PC-9 (cell line): ENCODE measurements at regions of chr7 and their contacts with region 1.

Region 1: DNA sequence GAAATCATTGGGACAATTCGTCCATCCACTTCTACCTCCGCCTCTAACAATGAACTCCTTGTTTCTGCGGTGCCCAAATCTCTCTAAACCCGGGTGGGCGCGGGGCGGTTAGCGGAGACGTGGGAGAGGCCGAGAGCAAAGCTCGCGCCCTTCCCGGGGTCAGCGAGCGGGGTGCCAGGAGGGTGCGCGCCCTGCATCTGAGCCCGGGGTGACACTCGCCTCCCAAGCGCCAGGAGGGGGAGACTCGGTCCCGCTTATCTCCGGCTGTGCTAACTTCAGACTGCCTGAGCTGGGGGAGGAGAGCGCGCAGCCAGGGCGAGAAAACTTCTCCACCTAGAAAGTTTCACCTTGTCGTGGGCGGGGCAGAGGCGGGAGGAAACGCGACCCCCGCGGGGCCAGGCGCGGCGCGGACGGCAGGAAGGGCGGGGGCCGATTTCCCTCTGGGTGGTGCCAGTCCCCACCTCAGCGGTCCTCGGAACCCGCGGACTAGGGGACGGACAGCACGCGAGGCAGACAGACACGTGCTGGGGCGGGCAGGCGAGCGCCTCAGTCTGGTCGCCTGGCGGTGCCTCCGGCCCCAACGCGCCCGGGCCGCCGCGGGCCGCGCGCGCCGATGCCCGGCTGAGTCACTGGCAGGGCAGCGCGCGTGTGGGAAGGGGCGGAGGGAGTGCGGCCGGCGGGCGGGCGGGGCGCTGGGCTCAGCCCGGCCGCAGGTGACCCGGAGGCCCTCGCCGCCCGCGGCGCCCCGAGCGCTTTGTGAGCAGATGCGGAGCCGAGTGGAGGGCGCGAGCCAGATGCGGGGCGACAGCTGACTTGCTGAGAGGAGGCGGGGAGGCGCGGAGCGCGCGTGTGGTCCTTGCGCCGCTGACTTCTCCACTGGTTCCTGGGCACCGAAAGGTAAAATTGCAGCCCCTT is at the start of gene MET:
- DNase-seq: peak; percentile 82 to 98
- H3K4me3 ChIP-seq: peak within 1 kb of the TSS; percentile 98
- H3K27ac ChIP-seq: peak within 1 kb of the TSS; percentile 90
- H3K4me1 ChIP-seq: peaks cover 40% of the 10 kb centered on the region
- H3K27me3 ChIP-seq: no peaks in the 10 kb centered on the region
- CTCF ChIP-seq: peak; percentile 76
- total RNA-seq, gene MET: 237 and 287 TPM in 2 replicates

Region 2: GRCh38 chr7:115962340-115962739 is 709.6 kb before region 1 on chr7:
- CTCF ChIA-PET with region 1: no interaction called
- POLR2A ChIA-PET with region 1: no interaction called
- intact Hi-C with region 1: no loop called
- DNase-seq: no peak
- H3K4me3 ChIP-seq: no peak overlapping the region
- H3K27ac ChIP-seq: no peak overlapping the region
- H3K4me1 ChIP-seq: no peaks in the 10 kb centered on the region
- H3K27me3 ChIP-seq: no peaks in the 10 kb centered on the region
- CTCF ChIP-seq: no peak

Region 3: DNA sequence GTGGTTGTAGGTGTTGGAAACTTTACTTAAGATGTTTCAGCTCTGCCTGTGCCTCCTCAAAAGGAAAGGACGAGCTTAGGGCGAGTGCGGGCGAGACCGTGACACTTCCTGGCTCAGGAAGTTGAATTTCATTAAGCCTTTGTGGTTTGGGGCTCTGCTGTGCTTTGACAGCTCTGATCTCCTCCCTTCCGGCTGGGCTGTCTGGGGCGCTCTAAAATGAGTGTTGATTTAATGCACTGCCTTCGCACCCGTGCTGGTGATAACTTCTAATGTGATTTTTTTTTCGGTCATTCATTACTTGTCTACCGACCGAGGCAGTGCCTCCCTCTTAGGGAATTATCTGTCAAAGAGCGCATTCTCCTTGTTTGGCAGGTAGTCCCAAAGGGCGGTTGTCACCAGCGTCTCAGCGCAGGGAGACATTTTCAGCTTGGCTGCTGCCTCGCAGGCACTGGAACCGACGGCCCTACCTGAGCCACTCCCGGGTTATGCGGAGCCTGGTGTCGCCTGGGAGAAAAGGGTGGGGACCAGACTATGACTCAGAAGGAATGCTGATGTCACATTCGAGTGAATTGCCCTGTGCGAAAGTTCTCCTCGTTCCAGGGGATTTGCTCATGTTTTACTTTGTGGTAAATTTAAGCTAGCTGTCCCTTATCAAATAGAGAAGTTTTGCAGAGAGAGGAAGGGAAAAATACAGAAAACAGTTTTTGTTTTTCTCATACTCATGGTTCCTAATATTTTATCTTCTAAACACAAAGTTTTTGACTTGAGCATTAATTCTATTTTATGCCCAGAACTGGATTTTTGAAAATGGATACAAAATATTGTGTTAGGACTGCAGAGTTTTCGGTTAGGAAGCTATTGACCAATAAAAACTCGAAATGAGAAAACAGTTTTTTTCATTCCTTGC is 460.7 kb before region 1 on chr7:
- CTCF ChIA-PET with region 1: no interaction called
- POLR2A ChIA-PET with region 1: interaction called, 3 read pairs
- intact Hi-C with region 1: loop called (anchors 1 kb)
- DNase-seq: peak; percentile 92 to 93
- H3K4me3 ChIP-seq: peak overlapping the region; percentile 87
- H3K27ac ChIP-seq: peak overlapping the region; percentile 99
- H3K4me1 ChIP-seq: peaks cover 46% of the 10 kb centered on the region
- H3K27me3 ChIP-seq: no peaks in the 10 kb centered on the region
- CTCF ChIP-seq: no peak

Region 4: GRCh38 chr7:116598278-116598677 is 73.7 kb before region 1 on chr7:
- CTCF ChIA-PET with region 1: no interaction called
- POLR2A ChIA-PET with region 1: no interaction called
- intact Hi-C with region 1: no loop called
- DNase-seq: no peak
- H3K4me3 ChIP-seq: no peak overlapping the region
- H3K27ac ChIP-seq: no peak overlapping the region
- H3K4me1 ChIP-seq: no peaks in the 10 kb centered on the region
- H3K27me3 ChIP-seq: no peaks in the 10 kb centered on the region
- CTCF ChIP-seq: no peak

Region 5: GRCh38 chr7:116692401-116693308 is 20.7 kb after region 1 on chr7:
- CTCF ChIA-PET with region 1: no interaction called
- POLR2A ChIA-PET with region 1: interaction called, 10 read pairs
- intact Hi-C with region 1: loop called (anchors 1 kb)
- DNase-seq: peak in 1 of 2 experiments; percentile 89
- H3K4me3 ChIP-seq: peak overlapping the region; percentile 36; the same call in 1 of the 2 replicates
- H3K27ac ChIP-seq: peak overlapping the region; percentile 89
- H3K4me1 ChIP-seq: peaks cover 46% of the 10 kb centered on the region
- H3K27me3 ChIP-seq: no peaks in the 10 kb centered on the region
- CTCF ChIP-seq: no peak

Region 6: GRCh38 chr7:116733924-116734580 is 62.1 kb after region 1 on chr7:
- CTCF ChIA-PET with region 1: no interaction called
- POLR2A ChIA-PET with region 1: interaction called, 4 read pairs
- intact Hi-C with region 1: loop called (anchors 1 kb)
- DNase-seq: no peak
- H3K4me3 ChIP-seq: no peak overlapping the region
- H3K27ac ChIP-seq: no peak overlapping the region
- H3K4me1 ChIP-seq: peaks cover 13% of the 10 kb centered on the region
- H3K27me3 ChIP-seq: no peaks in the 10 kb centered on the region
- CTCF ChIP-seq: no peak

Region 7: GRCh38 chr7:116809636-116810266 is 137.8 kb after region 1 on chr7:
- CTCF ChIA-PET with region 1: interaction called, 10 read pairs
- POLR2A ChIA-PET with region 1: interaction called, 3 read pairs
- intact Hi-C with region 1: loop called (anchors 1 kb)
- DNase-seq: peak; percentile 31 to 71
- H3K4me3 ChIP-seq: peak overlapping the region; percentile 25; the same call in 1 of the 2 replicates
- H3K27ac ChIP-seq: peak overlapping the region; percentile 81
- H3K4me1 ChIP-seq: peaks cover 44% of the 10 kb centered on the region
- H3K27me3 ChIP-seq: no peaks in the 10 kb centered on the region
- CTCF ChIP-seq: peak; percentile 87

Region 8: DNA sequence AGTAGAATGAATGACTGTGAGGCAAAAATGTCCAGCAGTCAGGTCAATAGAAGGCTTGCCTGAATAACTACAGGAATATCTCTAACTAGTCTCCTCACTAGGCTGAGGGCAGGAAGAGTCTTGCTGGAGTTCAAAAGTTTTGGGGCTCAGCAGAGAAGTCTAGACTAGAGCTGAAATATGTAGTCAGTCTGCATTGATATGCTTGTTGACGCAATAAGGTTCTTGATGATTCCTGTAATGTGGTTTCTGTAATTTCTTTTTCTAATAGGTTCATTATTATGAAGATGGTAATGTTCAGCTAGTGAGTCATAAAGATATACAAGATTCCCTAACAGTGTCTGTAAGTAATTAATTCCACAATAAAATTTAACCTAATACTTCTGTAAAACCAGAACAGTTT is 239.9 kb after region 1 on chr7:
- CTCF ChIA-PET with region 1: no interaction called
- POLR2A ChIA-PET with region 1: no interaction called
- intact Hi-C with region 1: no loop called
- DNase-seq: no peak
- H3K4me3 ChIP-seq: no peak overlapping the region
- H3K27ac ChIP-seq: no peak overlapping the region
- H3K4me1 ChIP-seq: no peaks in the 10 kb centered on the region
- H3K27me3 ChIP-seq: no peaks in the 10 kb centered on the region
- CTCF ChIP-seq: no peak

Region 9: GRCh38 chr7:117127585-117128168 is 455.7 kb after region 1 on chr7:
- CTCF ChIA-PET with region 1: no interaction called
- POLR2A ChIA-PET with region 1: no interaction called
- intact Hi-C with region 1: loop called (anchors 5 kb)
- DNase-seq: peak; percentile 18 to 49
- H3K4me3 ChIP-seq: no peak overlapping the region
- H3K27ac ChIP-seq: no peak overlapping the region
- H3K4me1 ChIP-seq: peaks cover 32% of the 10 kb centered on the region
- H3K27me3 ChIP-seq: no peaks in the 10 kb centered on the region
- CTCF ChIP-seq: peak; percentile 83